Heart left ventricle (tissue), 16 donors: ENCODE measurements at regions of chr2 and their contacts with region 1.

Region 1: DNA sequence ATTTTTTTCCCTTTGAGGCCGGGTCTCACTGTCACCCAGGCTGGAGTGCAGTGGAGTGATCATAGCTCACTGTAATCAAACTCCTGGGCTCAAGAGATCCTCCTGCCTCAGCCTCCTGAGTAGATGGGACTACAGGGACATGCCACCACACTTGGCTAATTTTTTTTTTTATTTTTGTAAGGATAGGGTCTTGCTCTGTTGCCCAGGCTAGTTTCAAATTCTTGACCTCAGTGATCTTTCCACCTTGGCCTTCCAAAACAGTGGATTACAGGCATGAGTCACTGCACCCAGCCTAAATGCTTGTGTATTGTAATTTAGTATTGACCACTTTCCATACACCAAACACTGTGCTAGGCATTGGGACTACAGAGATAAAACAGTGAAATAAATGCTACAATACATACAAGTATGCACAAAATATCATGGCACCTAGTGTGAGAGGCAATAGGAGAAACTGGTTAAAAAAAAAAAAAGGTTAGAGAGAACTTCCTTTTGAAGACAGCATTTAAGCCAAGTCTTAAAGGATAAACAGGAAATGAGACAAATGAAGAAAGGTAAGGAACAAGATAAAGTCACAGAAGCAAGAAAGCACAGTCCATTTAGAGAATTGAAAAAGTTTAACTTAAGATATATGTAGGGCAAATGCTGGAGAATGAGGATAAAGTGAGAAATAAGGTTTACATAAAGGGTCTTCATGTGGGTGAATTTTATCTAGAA is 113.4 kb downstream of the GORASP2 start:
- DNase-seq: no peak
- ATAC-seq: no peak
- H3K4me3 ChIP-seq: no peak overlapping the region
- H3K27ac ChIP-seq: no peak overlapping the region
- H3K4me1 ChIP-seq: no peaks in the 10 kb centered on the region
- H3K27me3 ChIP-seq: no peaks in the 10 kb centered on the region
- CTCF ChIP-seq: no peak
- POLR2A ChIP-seq: no peak

Region 2: GRCh38 chr2:170991399-170992182 is 50.8 kb before region 1 on chr2:
- intact Hi-C with region 1: loop called in 1 of 10 experiments (anchors 10 kb)
- DNase-seq: no peak
- ATAC-seq: no peak
- H3K4me3 ChIP-seq: no peak overlapping the region
- H3K27ac ChIP-seq: no peak overlapping the region
- H3K4me1 ChIP-seq: no peaks in the 10 kb centered on the region
- H3K27me3 ChIP-seq: no peaks in the 10 kb centered on the region
- CTCF ChIP-seq: no peak
- POLR2A ChIP-seq: no peak